Activated CD4-positive, alpha-beta T cell treated with anti-CD3 and anti-CD28 coated beads for 36 hours (primary cell): ENCODE measurements at regions of chr5 and their contacts with region 1.

Region 1: GRCh38 chr5:150723845-150724244 is 23.0 kb upstream of the RBM22 start:
- DNase-seq: no peak
- ATAC-seq: no peak
- H3K4me3 Mint-ChIP-seq: no peak overlapping the region
- H3K27ac Mint-ChIP-seq: no peak overlapping the region
- H3K4me1 Mint-ChIP-seq: no peaks in the 10 kb centered on the region
- H3K27me3 Mint-ChIP-seq: no peaks in the 10 kb centered on the region

Region 2: GRCh38 chr5:150538007-150538917 is 185.6 kb before region 1 on chr5:
- CTCF ChIA-PET with region 1: no interaction called
- POLR2A ChIA-PET with region 1: no interaction called
- intact Hi-C with region 1: no loop called
- DNase-seq: no peak
- ATAC-seq: no peak
- H3K4me3 Mint-ChIP-seq: no peak overlapping the region
- H3K27ac Mint-ChIP-seq: no peak overlapping the region
- H3K4me1 Mint-ChIP-seq: no peaks in the 10 kb centered on the region
- H3K27me3 Mint-ChIP-seq: no peaks in the 10 kb centered on the region

Region 3: DNA sequence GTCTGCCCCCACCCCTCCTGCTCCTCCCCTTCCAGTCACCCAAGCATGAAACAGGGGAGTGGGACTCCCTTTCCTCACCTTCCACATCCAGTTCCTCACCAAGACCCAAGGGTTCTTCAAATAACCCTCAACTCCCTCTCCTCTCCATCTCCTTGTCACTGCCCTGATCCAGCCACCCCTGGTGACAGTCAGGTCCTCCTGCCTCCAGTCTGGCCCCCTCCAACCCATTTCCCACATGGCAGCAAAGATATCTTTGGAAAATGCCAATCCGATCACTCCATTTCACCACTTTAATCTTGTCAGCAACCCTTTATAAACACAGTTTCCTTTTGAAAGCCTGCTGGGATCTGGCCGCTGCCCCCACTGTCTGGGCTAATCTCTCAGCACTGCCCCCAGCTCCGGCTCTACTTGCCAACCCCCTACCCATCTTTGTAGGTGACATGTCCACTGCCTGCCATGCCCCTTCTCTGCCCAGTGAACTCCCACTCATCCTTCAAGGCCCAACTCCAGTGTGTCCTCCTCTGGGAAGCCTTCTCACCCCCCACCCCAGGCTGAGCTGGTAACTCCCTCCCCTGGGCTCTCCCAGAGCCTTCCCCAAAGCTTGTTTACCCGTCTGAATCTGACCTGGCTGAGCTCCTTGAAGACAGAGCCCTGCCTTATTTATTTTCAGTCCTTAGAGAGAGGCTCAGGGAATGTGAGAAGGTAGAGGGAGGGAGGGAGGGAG is 63.6 kb before region 1 on chr5:
- CTCF ChIA-PET with region 1: no interaction called
- POLR2A ChIA-PET with region 1: no interaction called
- intact Hi-C with region 1: no loop called
- DNase-seq: no peak
- ATAC-seq: no peak
- H3K4me3 Mint-ChIP-seq: no peak overlapping the region
- H3K27ac Mint-ChIP-seq: no peak overlapping the region
- H3K4me1 Mint-ChIP-seq: no peaks in the 10 kb centered on the region
- H3K27me3 Mint-ChIP-seq: no peaks in the 10 kb centered on the region

Region 4: DNA sequence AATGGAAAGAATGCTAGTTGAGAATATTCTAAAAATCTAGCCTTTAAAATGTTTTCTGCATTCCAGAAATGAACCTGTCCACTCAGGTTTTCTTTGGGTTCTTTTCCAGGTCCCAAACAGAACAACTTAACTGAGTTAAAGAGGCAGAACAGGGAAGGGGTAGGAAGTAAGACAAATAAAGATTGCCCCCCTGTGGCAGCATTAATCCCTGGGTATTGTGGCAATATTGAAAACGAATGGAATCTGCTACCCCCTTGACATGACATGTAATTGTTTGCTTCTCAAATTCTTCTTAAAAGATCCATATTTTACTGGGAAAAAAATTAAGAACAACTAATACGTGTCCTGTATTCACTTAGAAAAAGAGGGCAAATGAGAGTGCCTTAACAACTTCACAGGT is 13.7 kb before region 1 on chr5:
- CTCF ChIA-PET with region 1: interaction called, 15 read pairs
- POLR2A ChIA-PET with region 1: no interaction called
- intact Hi-C with region 1: no loop called
- DNase-seq: no peak
- ATAC-seq: no peak
- H3K4me3 Mint-ChIP-seq: no peak overlapping the region
- H3K27ac Mint-ChIP-seq: no peak overlapping the region
- H3K4me1 Mint-ChIP-seq: no peaks in the 10 kb centered on the region
- H3K27me3 Mint-ChIP-seq: no peaks in the 10 kb centered on the region